ENCODE measurements at regions of chr10 and their contacts with region 1.

Region 1: DNA sequence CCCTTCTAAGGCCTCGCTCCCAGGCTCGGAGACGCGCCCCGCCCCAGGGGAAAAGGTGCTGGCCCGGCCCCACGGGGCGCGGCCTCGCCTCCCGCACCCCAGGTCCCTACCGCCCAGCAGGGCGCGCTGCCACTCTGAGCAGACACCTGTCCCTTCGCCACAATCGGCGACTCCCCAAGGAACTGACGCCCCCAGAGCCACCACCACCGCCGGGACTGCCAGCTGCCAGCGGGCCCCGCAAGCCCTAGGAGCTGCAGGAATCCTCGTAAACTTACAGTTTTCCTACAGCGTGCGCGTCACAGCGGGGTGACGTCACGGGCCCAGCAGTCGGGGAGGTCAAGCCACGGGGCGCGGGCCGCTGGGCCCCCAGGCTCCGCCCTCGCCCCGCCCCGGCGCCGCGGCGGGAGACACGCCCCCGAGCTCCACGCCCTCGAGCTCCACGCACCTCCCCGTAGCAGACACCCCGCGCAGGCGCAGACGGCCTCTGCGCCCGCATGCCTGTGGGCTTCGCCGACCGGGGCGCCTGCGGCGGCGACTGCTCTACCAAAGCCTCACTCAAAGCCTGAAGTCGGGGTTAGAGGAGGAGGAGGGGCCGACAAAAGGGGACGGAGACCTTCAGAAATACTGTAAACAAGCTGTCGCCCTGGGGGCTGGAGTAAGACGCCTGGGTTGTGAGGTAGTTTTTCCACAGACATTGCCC is at the start of gene ZNF438:
- DNase-seq: peak; percentile 98
- ATAC-seq: peak; percentile 84
- H3K4me3 Mint-ChIP-seq: peak within 1 kb of the TSS; percentile 89
- H3K27ac Mint-ChIP-seq: peak within 1 kb of the TSS; percentile 97
- H3K4me1 Mint-ChIP-seq: peaks cover 14% of the 10 kb centered on the region
- H3K27me3 Mint-ChIP-seq: no peaks in the 10 kb centered on the region
- CTCF ChIP-seq: no peak
- total RNA-seq, gene ZNF438: 2.9 and 3.9 TPM in 2 replicates

Region 2: DNA sequence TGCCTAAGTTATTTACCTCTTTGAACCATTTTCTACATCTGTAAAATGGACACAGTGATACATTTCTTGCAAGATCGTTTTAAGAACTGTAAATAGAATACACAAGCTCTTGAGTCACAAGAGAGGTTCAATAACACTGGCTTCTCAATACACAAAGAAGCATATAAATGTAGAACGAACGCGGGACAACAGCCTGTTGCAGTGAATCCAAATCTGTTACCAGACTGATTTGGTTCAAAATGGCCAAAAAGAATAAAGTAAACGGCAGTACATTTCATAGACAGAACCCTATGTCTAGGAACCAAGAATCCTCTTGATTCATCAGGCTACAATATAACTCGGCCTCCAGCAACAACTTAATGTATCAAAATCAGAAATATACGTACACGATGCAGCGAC is 683.3 kb before region 1 on chr10:
- CTCF ChIA-PET with region 1: no interaction called
- POLR2A ChIA-PET with region 1: no interaction called
- intact Hi-C with region 1: loop called (anchors 10 kb)
- DNase-seq: no peak
- ATAC-seq: no peak
- H3K4me3 Mint-ChIP-seq: peak overlapping the region; percentile 99
- H3K27ac Mint-ChIP-seq: peak overlapping the region; percentile 95
- H3K4me1 Mint-ChIP-seq: peaks cover 46% of the 10 kb centered on the region
- H3K27me3 Mint-ChIP-seq: no peaks in the 10 kb centered on the region
- CTCF ChIP-seq: no peak

Region 3: GRCh38 chr10:30902621-30903396 is 128.9 kb before region 1 on chr10:
- CTCF ChIA-PET with region 1: no interaction called
- POLR2A ChIA-PET with region 1: no interaction called
- intact Hi-C with region 1: no loop called
- DNase-seq: no peak
- ATAC-seq: no peak
- H3K4me3 Mint-ChIP-seq: no peak overlapping the region
- H3K27ac Mint-ChIP-seq: no peak overlapping the region
- H3K4me1 Mint-ChIP-seq: no peaks in the 10 kb centered on the region
- H3K27me3 Mint-ChIP-seq: no peaks in the 10 kb centered on the region
- CTCF ChIP-seq: no peak

Region 4: GRCh38 chr10:31090894-31091607 is 59.3 kb after region 1 on chr10:
- CTCF ChIA-PET with region 1: interaction called, 3 read pairs
- POLR2A ChIA-PET with region 1: interaction called, 4 read pairs
- intact Hi-C with region 1: loop called (anchors 2 kb)
- DNase-seq: no peak
- ATAC-seq: peak; percentile 89
- H3K4me3 Mint-ChIP-seq: peak overlapping the region; percentile 2
- H3K27ac Mint-ChIP-seq: peak overlapping the region; percentile 64
- H3K4me1 Mint-ChIP-seq: peaks cover 13% of the 10 kb centered on the region
- H3K27me3 Mint-ChIP-seq: no peaks in the 10 kb centered on the region
- CTCF ChIP-seq: no peak

Region 5: DNA sequence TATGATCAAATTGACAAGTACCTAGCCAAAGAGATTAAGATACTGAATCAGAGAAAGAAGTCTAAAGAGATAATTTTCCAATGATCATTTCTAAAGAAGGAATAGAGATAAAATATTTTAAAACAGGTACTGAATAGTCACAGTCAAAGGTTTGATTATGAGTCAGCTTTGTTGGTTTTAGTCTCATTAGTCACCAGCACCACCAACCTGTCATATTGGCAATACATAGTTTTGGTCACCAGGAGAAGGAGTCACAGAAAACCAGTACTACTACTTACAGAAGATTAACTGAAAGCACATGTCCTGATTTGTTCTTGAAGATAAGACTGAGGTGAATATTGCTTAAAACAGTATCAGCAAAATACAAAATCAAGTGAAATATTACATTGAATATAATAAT is 321.9 kb after region 1 on chr10:
- CTCF ChIA-PET with region 1: interaction called, 6 read pairs
- POLR2A ChIA-PET with region 1: interaction called, 3 read pairs
- intact Hi-C with region 1: loop called (anchors 1 kb)
- DNase-seq: no peak
- ATAC-seq: peak; percentile 81
- H3K4me3 Mint-ChIP-seq: no peak overlapping the region
- H3K27ac Mint-ChIP-seq: no peak overlapping the region
- H3K4me1 Mint-ChIP-seq: peaks cover 47% of the 10 kb centered on the region
- H3K27me3 Mint-ChIP-seq: no peaks in the 10 kb centered on the region
- CTCF ChIP-seq: no peak

Region 6: GRCh38 chr10:31707093-31708039 is 675.7 kb after region 1 on chr10:
- CTCF ChIA-PET with region 1: no interaction called
- POLR2A ChIA-PET with region 1: no interaction called
- intact Hi-C with region 1: loop called (anchors 1 kb)
- DNase-seq: no peak
- ATAC-seq: peak; percentile 91
- H3K4me3 Mint-ChIP-seq: peak overlapping the region; percentile 62
- H3K27ac Mint-ChIP-seq: peak overlapping the region; percentile 72
- H3K4me1 Mint-ChIP-seq: peaks cover 39% of the 10 kb centered on the region
- H3K27me3 Mint-ChIP-seq: no peaks in the 10 kb centered on the region
- CTCF ChIP-seq: no peak

Region 7: GRCh38 chr10:31928549-31929260 is 897.0 kb after region 1 on chr10 and contains the start of gene ARHGAP12:
- CTCF ChIA-PET with region 1: no interaction called
- POLR2A ChIA-PET with region 1: no interaction called
- intact Hi-C with region 1: loop called (anchors 2 kb)
- DNase-seq: peak; percentile 97
- ATAC-seq: peak; percentile 74
- H3K4me3 Mint-ChIP-seq: peak within 1 kb of the TSS; percentile 91
- H3K27ac Mint-ChIP-seq: peak within 1 kb of the TSS; percentile 88
- H3K4me1 Mint-ChIP-seq: peaks cover 44% of the 10 kb centered on the region
- H3K27me3 Mint-ChIP-seq: no peaks in the 10 kb centered on the region
- CTCF ChIP-seq: no peak
- total RNA-seq, gene ARHGAP12: 23.2 and 27.3 TPM in 2 replicates

Measured in activated B cell treated with CpG ODN at 0.5 μM for 24 hours (primary cell).